ENCODE measurements at regions of chr3 and their contacts with region 1.

Region 1: DNA sequence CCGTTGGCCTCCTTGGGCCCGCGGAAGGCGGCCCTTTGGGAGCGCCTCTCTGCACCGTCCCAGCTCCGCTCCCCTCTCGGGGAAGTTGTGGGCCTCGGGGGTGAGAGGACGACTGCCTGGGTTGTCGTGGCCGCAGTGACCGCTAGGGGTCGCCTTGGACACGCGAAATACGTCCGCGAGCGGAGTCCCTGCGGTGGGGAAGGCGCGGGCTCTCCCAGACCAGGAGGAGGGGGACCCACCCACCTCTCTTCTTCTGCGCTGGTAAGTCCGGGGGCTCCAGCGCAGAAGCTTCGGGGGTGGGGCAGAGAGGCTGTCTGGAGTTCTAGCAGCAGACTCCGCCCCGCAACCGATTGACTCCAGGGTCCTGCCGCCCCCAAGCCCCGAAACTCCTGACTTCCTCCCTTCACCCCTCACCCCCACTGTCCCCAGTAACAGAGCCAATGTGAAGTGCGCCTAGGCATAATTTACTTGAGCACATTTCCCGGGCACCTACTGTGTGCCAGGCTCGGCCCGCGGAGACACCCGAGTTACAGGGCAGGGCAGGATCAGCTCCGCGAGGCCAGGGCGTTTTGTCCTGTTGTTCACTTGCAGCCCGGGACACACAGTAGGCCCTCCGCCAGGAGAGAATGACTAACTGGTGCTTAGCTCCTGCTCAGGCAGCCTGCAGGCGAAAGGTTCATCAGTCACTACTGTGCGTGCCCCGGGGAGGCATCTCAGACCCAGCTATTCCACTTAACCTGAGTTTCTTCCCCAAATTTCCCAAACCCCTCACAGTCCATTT is 32.8 kb downstream of the DNASE1L3 start:
- DNase-seq: no peak
- ATAC-seq: peak; percentile 94
- H3K4me3 ChIP-seq: peak overlapping the region; percentile 33; the same call in 1 of the 2 replicates
- H3K27ac ChIP-seq: no peak overlapping the region
- H3K4me1 ChIP-seq: peaks cover 14% of the 10 kb centered on the region
- H3K27me3 ChIP-seq: no peaks in the 10 kb centered on the region
- CTCF ChIP-seq: peak; percentile 81 to 93 (median 88)
- EP300 ChIP-seq: no peak
- POLR2A ChIP-seq: no peak
- RAD21 ChIP-seq: peak; percentile 68

Region 2: DNA sequence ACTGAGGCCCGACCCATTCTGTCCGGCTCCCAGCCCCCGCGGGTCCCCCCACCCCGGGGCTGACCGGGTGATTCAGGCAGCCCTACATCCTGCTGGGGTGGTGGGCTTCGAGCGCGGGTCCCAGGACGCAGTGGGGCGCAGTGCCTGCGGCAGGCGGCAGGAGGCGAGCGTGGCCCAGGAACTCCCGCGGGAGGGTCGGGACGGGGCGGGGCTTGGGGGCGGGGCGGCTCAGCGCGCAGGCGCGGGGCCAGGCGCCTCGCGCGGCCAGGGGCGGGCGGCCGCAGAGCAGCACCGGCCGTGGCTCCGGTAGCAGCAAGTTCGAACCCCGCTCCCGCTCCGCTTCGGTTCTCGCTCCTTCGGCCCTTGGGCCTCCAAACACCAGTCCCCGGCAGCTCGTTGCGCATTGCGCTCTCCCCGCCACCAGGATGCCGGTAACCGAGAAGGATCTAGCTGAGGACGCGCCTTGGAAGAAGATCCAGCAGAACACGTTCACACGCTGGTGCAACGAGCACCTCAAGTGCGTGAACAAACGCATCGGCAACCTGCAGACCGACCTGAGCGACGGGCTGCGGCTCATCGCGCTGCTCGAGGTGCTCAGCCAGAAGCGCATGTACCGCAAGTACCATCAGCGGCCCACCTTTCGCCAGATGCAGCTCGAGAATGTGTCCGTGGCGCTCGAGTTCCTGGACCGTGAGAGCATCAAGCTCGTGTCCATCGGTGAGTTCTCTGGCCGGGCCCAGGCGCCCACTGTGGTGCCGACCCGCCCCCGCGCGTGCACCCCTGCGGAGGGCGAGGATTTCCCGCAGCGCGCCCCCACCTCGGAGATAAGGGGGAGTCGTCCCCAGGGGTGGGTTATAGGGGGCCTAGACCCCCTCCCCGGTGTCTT is 169.6 kb before region 1 on chr3 and contains the start of gene FLNB:
- CTCF ChIA-PET with region 1: interaction called, 43 read pairs
- POLR2A ChIA-PET with region 1: interaction called, 6 read pairs
- RAD21 ChIA-PET with region 1: interaction called, 9 read pairs
- SMC1A ChIA-PET with region 1: interaction called, 15 read pairs
- in situ Hi-C with region 1: loop called (anchors 5 kb)
- intact Hi-C with region 1: loop called (anchors 1 kb)
- DNase-seq: no peak
- ATAC-seq: peak; percentile 81
- H3K4me3 ChIP-seq: peak within 1 kb of the TSS; percentile 77
- H3K27ac ChIP-seq: peak within 1 kb of the TSS; percentile 45
- H3K4me1 ChIP-seq: peaks cover 16% of the 10 kb centered on the region
- H3K27me3 ChIP-seq: no peaks in the 10 kb centered on the region
- CTCF ChIP-seq: peak; percentile 72 to 95 (median 90)
- EP300 ChIP-seq: no peak
- POLR2A ChIP-seq: peak; percentile 90
- RAD21 ChIP-seq: peak; percentile 91
- polyA plus RNA-seq, gene FLNB: 13.6 to 15.8 TPM

Region 3: GRCh38 chr3:58151637-58152036 is 26.3 kb before region 1 on chr3:
- CTCF ChIA-PET with region 1: no interaction called
- POLR2A ChIA-PET with region 1: no interaction called
- RAD21 ChIA-PET with region 1: no interaction called
- SMC1A ChIA-PET with region 1: no interaction called
- in situ Hi-C with region 1: no loop called
- intact Hi-C with region 1: no loop called
- DNase-seq: no peak
- ATAC-seq: no peak
- H3K4me3 ChIP-seq: no peak overlapping the region
- H3K27ac ChIP-seq: no peak overlapping the region
- H3K4me1 ChIP-seq: no peaks in the 10 kb centered on the region
- H3K27me3 ChIP-seq: no peaks in the 10 kb centered on the region
- CTCF ChIP-seq: no peak
- EP300 ChIP-seq: no peak
- POLR2A ChIP-seq: no peak
- RAD21 ChIP-seq: no peak

Region 4: GRCh38 chr3:58167431-58168351 is 10.2 kb before region 1 on chr3:
- CTCF ChIA-PET with region 1: interaction called, 62 read pairs
- POLR2A ChIA-PET with region 1: interaction called, 3 read pairs
- RAD21 ChIA-PET with region 1: interaction called, 3 read pairs
- SMC1A ChIA-PET with region 1: interaction called, 5 read pairs
- in situ Hi-C with region 1: no loop called
- intact Hi-C with region 1: no loop called
- DNase-seq: no peak
- ATAC-seq: peak; percentile 99
- H3K4me3 ChIP-seq: no peak overlapping the region
- H3K27ac ChIP-seq: no peak overlapping the region
- H3K4me1 ChIP-seq: no peaks in the 10 kb centered on the region
- H3K27me3 ChIP-seq: no peaks in the 10 kb centered on the region
- CTCF ChIP-seq: peak; percentile 76 to 97 (median 95)
- EP300 ChIP-seq: no peak
- POLR2A ChIP-seq: no peak
- RAD21 ChIP-seq: peak; percentile 46

Region 5: DNA sequence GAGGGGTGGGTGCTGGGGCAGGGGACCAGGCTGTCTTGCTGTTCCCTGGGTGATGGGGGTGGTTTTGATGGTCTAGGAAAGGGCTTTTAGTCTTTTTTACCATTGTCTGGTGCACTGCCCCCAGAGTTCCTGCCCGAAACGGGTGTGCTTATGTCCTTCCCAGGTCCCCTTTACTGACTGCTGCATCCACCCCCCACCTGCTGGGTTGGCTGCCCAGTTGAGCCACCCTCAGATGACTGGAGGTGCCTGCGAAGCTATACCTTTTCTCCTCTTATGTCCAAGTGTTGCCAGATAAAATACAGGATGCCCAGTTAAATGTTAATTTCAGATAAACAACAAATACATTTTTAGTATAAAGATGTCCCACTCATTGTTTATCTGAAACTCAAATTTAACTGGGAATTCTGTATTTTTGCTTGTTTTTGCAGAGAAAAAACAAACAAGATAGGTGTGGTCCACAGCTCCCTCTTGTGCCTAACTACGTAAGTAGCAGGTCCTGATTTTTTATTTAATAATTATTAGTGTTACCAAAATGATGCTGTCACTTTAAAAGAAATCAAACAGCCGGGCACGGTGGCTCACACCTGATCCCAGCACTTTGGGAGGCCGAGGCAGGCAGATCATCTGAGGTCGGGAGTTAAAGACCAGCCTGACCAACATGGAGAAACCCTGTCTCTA is 122.0 kb after region 1 on chr3:
- CTCF ChIA-PET with region 1: interaction called, 503 read pairs
- POLR2A ChIA-PET with region 1: no interaction called
- RAD21 ChIA-PET with region 1: interaction called, 30 read pairs
- SMC1A ChIA-PET with region 1: interaction called, 22 read pairs
- in situ Hi-C with region 1: no loop called
- intact Hi-C with region 1: no loop called
- DNase-seq: no peak
- ATAC-seq: peak; percentile 59
- H3K4me3 ChIP-seq: no peak overlapping the region
- H3K27ac ChIP-seq: no peak overlapping the region
- H3K4me1 ChIP-seq: no peaks in the 10 kb centered on the region
- H3K27me3 ChIP-seq: no peaks in the 10 kb centered on the region; a peak in 1 of 4 replicates
- CTCF ChIP-seq: peak; percentile 48 to 59 (median 51); a peak in 5 of 6 replicates
- EP300 ChIP-seq: no peak
- POLR2A ChIP-seq: no peak
- RAD21 ChIP-seq: peak; percentile 74

Region 6: DNA sequence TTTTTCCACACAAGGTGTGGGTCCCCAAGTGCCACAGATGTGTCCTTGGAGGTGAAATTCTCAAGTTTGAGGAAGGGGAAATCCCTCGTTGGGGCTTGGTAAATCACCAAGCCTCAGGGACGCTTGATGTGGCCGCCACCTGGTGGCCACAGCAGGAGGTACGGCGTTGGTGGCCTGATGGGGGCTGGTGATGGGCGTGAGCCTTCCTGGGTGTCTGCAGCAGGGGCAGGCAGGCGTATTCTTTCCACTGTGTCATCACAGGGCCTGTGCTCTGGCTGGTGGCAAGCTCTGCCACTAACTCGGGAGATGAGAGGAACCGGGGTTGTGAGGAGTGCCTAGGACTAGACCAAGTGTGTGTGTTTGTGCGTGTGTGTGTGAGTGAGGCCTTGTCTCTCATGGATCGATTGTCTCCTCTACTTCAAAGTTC is 354.9 kb after region 1 on chr3:
- CTCF ChIA-PET with region 1: interaction called, 7 read pairs
- POLR2A ChIA-PET with region 1: no interaction called
- RAD21 ChIA-PET with region 1: interaction called, 4 read pairs
- SMC1A ChIA-PET with region 1: interaction called, 3 read pairs
- in situ Hi-C with region 1: loop called (anchors 5 kb)
- intact Hi-C with region 1: no loop called
- DNase-seq: peak; percentile 11
- ATAC-seq: peak; percentile 99
- H3K4me3 ChIP-seq: no peak overlapping the region
- H3K27ac ChIP-seq: no peak overlapping the region
- H3K4me1 ChIP-seq: no peaks in the 10 kb centered on the region
- H3K27me3 ChIP-seq: no peaks in the 10 kb centered on the region; a peak in 1 of 4 replicates
- CTCF ChIP-seq: peak; percentile 94 to 96 (median 94)
- EP300 ChIP-seq: no peak
- POLR2A ChIP-seq: no peak
- RAD21 ChIP-seq: peak; percentile 96